ENCODE measurements at regions of chr6 and their contacts with region 1.

Region 1: DNA sequence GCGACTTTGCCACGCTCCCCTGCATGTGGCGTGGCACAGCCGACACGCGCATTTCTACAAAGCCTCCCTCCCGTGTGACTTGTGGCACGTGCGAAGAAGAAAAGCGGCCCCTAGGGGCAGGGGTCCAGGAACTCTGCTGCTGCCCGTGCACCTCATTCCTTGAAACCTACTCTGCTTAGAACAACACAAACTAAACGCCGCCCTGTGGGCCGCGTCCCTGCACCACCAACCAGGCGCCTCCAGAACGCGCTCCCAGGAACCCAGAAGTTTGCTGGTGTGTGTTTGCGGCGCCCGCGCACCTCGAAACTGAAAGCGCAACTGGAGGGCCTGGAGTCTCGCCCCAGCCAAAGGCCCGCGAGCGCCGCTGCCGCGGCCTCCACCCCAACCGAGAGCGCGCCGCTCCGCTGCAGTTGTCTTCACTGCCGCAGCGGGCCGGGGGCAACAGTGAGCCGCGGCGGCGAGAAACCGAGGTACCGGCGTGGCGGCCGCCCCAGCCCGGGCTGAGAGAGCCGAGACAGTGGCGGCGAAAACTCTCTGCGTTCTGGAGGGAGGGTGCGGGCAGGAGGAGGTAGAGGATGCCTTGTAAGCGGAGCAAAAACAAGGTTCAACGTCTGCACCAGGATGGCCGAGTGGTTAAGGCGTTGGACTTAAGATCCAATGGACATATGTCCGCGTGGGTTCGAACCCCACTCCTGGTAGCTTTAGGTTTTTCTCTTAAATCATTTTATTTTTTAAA is 65.8 kb downstream of the STX11 start:
- DNase-seq: peak; percentile 98

Region 2: GRCh38 chr6:144104898-144105487 is 111.1 kb before region 1 on chr6:
- intact Hi-C with region 1: loop called in 1 of 2 experiments (anchors 5 kb)
- DNase-seq: no peak

Region 3: DNA sequence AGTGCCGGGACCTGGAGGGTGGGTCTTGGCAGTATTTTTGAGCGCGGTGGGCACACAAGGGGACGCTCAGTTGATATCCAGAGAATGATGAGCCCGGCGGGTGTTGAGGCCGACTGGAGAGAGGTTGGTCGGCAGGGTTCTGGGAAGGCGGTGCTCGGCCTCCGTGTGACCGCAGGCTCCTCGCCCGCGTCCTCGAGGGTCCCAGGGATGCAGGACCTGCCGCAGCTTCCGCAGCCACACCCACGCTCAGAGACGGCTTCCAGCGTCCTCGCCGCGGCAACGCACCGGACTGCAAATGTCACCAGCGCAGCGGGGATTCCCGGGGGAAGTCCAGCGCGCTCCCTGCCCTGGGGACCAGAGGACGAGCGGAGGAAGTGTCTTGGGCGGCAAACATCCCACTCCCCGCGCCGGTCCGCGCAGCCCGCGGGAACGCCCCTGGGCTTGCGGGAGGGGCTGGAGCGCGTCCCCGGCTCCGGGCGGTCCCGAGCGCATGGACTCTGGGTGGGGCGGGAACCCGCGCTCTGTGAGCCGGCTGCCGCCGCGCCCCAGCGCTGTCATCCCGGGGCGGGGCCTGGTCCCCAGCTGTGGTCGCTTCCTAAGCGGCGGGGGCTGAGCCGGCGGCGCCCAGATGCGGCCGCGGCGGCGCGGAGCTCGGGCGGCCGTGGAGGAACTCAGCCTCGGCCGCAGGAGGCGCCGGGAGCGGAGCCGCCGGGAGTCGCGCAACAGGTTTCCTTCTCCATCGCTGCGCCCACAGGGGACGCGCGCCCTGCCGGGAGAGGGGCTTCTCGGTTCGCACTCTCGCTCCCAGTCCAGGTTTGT is 66.0 kb before region 1 on chr6 and contains the start of gene STX11:
- intact Hi-C with region 1: loop called in 1 of 2 experiments (anchors 10 kb)
- DNase-seq: peak; percentile 93
- total RNA-seq, gene STX11: 7.0 to 10.5 TPM

Region 4: DNA sequence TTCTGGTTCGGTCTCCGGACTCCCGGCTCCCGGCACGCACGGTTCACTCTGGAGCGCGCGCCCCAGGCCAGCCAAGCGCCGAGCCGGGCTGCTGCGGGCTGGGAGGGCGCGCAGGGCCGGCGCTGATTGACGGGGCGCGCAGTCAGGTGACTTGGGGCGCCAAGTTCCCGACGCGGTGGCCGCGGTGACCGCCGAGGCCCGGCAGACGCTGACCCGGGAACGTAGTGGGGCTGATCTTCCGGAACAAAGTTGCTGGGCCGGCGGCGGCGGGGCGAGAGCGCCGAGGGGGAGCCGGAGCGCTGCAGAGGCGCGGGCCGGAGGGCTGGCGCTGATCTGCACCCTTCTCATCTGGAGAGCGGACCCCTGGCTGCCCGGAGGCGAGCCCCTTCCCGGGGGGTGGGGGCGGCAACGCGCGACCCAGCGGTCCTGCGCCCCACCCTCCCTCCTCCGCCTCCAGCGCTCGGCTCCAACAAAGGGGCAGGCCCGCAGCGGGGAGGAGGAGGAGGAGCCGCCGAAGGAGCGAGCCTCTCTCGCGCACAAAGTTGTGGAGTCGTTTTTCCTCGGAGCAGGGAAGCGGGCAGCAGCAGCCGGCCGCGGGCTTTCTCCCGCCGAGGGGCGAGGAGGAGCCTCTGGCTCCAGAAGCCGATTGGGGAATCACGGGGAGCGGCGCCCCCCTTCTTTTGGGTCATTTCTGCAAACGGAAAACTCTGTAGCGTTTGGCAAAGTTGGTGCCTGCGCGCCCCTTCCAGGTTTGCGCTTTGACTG is 68.9 kb after region 1 on chr6 and contains the start of gene UTRN:
- intact Hi-C with region 1: loop called in 1 of 2 experiments (anchors 10 kb)
- DNase-seq: peak; percentile 94
- total RNA-seq, gene UTRN: 215 to 229 TPM

Region 5: GRCh38 chr6:144482142-144482541 is 266.0 kb after region 1 on chr6:
- intact Hi-C with region 1: loop called in 1 of 2 experiments (anchors 10 kb)
- DNase-seq: peak; percentile 89